Naive thymus-derived CD4-positive, alpha-beta T cell (primary cell): ENCODE measurements at regions of chr16 and their contacts with region 1.

Region 1: GRCh38 chr16:87316923-87317749 is at the start of gene C16orf95:
- DNase-seq: peak; percentile 93 to 100 (median 96)
- ATAC-seq: peak; percentile 96
- H3K4me3 ChIP-seq: peak within 1 kb of the TSS; percentile 86
- H3K4me3 Mint-ChIP-seq: peak within 1 kb of the TSS; percentile 92 to 100 (median 97)
- H3K27ac ChIP-seq: peak within 1 kb of the TSS; percentile 91
- H3K27ac Mint-ChIP-seq: peak within 1 kb of the TSS; percentile 91 to 99 (median 94)
- H3K4me1 ChIP-seq: peaks cover 8 to 11% of the 10 kb centered on the region in 2 donors
- H3K4me1 Mint-ChIP-seq: peaks cover 11 to 23% (median 16%) of the 10 kb centered on the region in 7 donors
- H3K27me3 ChIP-seq: no peaks in the 10 kb centered on the region
- H3K27me3 Mint-ChIP-seq: peaks cover 0 to 2% (median 0%) of the 10 kb centered on the region in 5 donors
- total RNA-seq, gene C16orf95: 1.3 to 8.6 (median 2.6) TPM

Region 2: GRCh38 chr16:87056083-87056482 is 261.1 kb before region 1 on chr16:
- CTCF ChIA-PET with region 1: no interaction called
- POLR2A ChIA-PET with region 1: no interaction called
- intact Hi-C with region 1: no loop called
- DNase-seq: no peak
- ATAC-seq: no peak
- H3K4me3 ChIP-seq: no peak overlapping the region
- H3K4me3 Mint-ChIP-seq: no peak overlapping the region
- H3K27ac ChIP-seq: no peak overlapping the region
- H3K27ac Mint-ChIP-seq: no peak overlapping the region
- H3K4me1 ChIP-seq: no peaks in the 10 kb centered on the region
- H3K4me1 Mint-ChIP-seq: peaks cover 0 to 4% (median 0%) of the 10 kb centered on the region in 7 donors
- H3K27me3 ChIP-seq: no peaks in the 10 kb centered on the region
- H3K27me3 Mint-ChIP-seq: peaks cover 13 to 43% (median 34%) of the 10 kb centered on the region in 5 donors

Region 3: GRCh38 chr16:87263471-87263961 is 53.6 kb before region 1 on chr16:
- CTCF ChIA-PET with region 1: no interaction called
- POLR2A ChIA-PET with region 1: no interaction called
- intact Hi-C with region 1: no loop called
- DNase-seq: no peak
- ATAC-seq: no peak
- H3K4me3 ChIP-seq: no peak overlapping the region
- H3K4me3 Mint-ChIP-seq: no peak overlapping the region
- H3K27ac ChIP-seq: no peak overlapping the region
- H3K27ac Mint-ChIP-seq: peak overlapping the region in 2 of 9 donors; percentile 2 to 78
- H3K4me1 ChIP-seq: no peaks in the 10 kb centered on the region
- H3K4me1 Mint-ChIP-seq: peaks cover 0 to 3% (median 0%) of the 10 kb centered on the region in 7 donors
- H3K27me3 ChIP-seq: no peaks in the 10 kb centered on the region
- H3K27me3 Mint-ChIP-seq: no peaks in the 10 kb centered on the region

Region 4: DNA sequence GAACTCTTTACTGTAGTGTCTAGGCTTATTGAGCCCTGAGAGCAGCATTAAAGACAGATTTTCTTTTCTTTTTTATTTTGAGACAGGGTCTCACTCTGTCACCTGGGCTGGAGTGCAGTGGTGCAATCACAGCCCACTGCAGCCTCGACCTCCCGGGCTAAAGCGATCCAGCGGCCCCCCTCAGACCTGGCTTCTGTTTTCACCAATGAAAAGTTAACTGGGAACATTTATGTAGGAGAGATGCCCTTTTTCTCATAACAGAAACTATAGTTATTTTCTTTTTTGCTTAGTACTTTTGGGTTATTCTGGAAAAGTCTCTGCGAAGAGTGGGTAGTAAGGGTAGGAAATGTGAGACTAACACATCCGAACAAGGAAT is 76.5 kb after region 1 on chr16:
- CTCF ChIA-PET with region 1: interaction called, 6 read pairs
- POLR2A ChIA-PET with region 1: interaction called, 6 read pairs
- intact Hi-C with region 1: loop called (anchors 1 kb)
- DNase-seq: no peak
- ATAC-seq: no peak
- H3K4me3 ChIP-seq: peak overlapping the region; percentile 84
- H3K4me3 Mint-ChIP-seq: peak overlapping the region; percentile 90 to 96 (median 93)
- H3K27ac ChIP-seq: peak overlapping the region; percentile 89
- H3K27ac Mint-ChIP-seq: peak overlapping the region; percentile 78 to 97 (median 94)
- H3K4me1 ChIP-seq: peaks cover 17 to 22% of the 10 kb centered on the region in 2 donors
- H3K4me1 Mint-ChIP-seq: peaks cover 25 to 55% (median 47%) of the 10 kb centered on the region in 7 donors
- H3K27me3 ChIP-seq: no peaks in the 10 kb centered on the region
- H3K27me3 Mint-ChIP-seq: no peaks in the 10 kb centered on the region